AG04450 (cell line): ENCODE measurements at regions of chr5 and their contacts with region 1.

Region 1: GRCh38 chr5:110625376-110625999 is 101.0 kb downstream of the TMEM232 start:
- DNase-seq: no peak
- H3K4me3 ChIP-seq: no peak overlapping the region
- H3K27ac ChIP-seq: no peak overlapping the region
- H3K27me3 ChIP-seq: no peaks in the 10 kb centered on the region
- CTCF ChIP-seq: peak; percentile 51

Region 2: GRCh38 chr5:109688971-109689739 is 936.3 kb before region 1 on chr5:
- CTCF ChIA-PET with region 1: interaction called, 12 read pairs
- POLR2A ChIA-PET with region 1: no interaction called
- DNase-seq: peak; percentile 54
- H3K4me3 ChIP-seq: peak overlapping the region; percentile 87
- H3K27ac ChIP-seq: peak overlapping the region; percentile 86
- H3K27me3 ChIP-seq: no peaks in the 10 kb centered on the region
- CTCF ChIP-seq: no peak

Region 3: DNA sequence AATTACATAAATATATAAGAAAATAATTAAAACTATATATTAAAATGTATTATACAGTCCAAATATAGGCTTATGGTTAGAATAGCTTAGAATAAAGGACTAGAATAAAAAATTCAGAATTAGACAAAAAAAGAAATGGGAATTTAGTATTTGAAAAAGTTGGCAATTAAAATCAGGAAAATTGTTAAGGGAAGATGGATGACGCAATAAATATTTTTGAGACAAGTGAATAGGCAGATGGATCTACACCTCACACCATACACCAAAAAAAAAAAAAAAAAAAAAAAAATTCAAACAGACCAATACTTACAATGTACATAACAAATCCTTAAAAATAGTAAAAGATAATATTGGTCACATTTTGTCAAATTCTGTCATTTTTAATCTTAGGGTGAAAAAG is 99.7 kb before region 1 on chr5:
- CTCF ChIA-PET with region 1: no interaction called
- POLR2A ChIA-PET with region 1: no interaction called
- DNase-seq: no peak
- H3K4me3 ChIP-seq: no peak overlapping the region
- H3K27ac ChIP-seq: no peak overlapping the region
- H3K27me3 ChIP-seq: no peaks in the 10 kb centered on the region
- CTCF ChIP-seq: no peak

Region 4: DNA sequence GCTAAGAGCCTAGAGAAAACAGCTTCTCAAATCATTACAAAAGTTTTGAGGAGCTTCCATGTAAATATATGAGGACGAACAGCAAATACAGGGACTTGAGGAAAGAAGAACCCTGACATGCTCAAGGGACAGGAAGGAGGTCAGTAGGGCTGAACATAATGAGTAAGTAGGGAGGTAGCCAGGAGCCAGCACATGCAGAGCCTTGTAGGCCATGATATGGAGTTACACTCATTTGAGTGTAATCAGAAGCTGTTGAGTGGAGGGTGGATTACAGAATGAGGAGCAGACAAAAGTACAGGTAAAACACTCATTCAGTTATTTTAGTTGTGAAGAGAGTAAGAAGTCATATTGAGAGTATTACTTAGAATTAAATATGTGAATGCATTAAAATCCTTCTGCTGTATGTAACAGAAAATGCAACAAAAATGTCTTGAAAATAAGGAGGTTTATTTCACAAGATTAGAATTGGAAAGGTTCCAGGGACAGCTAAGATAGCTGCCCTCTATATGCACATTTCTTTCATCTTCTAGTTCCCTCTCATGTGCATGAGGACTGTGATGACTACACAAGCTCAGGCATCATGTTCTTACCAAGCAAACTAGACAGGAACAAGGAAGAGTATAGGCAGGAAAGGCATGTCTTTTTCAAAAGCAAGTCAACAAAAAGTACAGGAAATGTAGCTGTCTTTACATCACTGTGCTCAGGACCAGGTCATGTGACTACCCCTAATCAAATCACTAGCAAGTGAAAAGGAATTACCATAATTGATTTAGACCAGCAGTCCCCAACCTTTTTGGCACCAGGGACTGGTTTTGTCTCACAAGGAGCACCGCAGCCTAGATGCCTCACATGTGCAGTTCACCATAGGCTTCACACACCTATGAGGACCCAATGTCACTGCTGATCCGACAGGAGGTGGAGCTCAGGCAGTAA is 13.7 kb after region 1 on chr5:
- CTCF ChIA-PET with region 1: interaction called, 14 read pairs
- POLR2A ChIA-PET with region 1: no interaction called
- DNase-seq: no peak
- H3K4me3 ChIP-seq: no peak overlapping the region
- H3K27ac ChIP-seq: no peak overlapping the region
- H3K27me3 ChIP-seq: no peaks in the 10 kb centered on the region
- CTCF ChIP-seq: no peak

Region 5: GRCh38 chr5:110687485-110687884 is 62.0 kb after region 1 on chr5:
- CTCF ChIA-PET with region 1: no interaction called
- POLR2A ChIA-PET with region 1: no interaction called
- DNase-seq: no peak
- H3K4me3 ChIP-seq: no peak overlapping the region
- H3K27ac ChIP-seq: no peak overlapping the region
- H3K27me3 ChIP-seq: no peaks in the 10 kb centered on the region
- CTCF ChIP-seq: no peak

Region 6: DNA sequence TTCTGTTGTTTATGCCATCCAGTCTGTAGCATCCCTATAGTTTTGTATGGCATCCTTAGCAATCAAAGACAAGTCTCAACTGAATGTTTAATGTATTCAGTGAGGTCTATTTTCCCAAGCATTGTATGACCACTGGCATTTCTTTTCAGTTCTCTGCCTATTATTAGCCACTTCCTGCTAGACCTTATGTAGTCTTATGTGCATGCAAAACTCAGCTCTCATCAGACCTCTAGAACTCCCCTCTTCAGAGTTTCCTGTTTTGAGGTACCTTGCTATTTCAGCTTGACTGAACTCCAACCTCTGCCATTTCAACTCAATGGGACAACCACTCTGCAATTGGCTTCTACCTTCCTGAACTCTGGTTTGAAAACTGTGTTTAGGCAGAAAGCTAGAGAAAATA is 226.6 kb after region 1 on chr5:
- CTCF ChIA-PET with region 1: no interaction called
- POLR2A ChIA-PET with region 1: no interaction called
- DNase-seq: no peak
- H3K4me3 ChIP-seq: no peak overlapping the region
- H3K27ac ChIP-seq: no peak overlapping the region
- H3K27me3 ChIP-seq: no peaks in the 10 kb centered on the region
- CTCF ChIP-seq: no peak